ENCODE measurements at regions of chr12 and their contacts with region 1.

Region 1: DNA sequence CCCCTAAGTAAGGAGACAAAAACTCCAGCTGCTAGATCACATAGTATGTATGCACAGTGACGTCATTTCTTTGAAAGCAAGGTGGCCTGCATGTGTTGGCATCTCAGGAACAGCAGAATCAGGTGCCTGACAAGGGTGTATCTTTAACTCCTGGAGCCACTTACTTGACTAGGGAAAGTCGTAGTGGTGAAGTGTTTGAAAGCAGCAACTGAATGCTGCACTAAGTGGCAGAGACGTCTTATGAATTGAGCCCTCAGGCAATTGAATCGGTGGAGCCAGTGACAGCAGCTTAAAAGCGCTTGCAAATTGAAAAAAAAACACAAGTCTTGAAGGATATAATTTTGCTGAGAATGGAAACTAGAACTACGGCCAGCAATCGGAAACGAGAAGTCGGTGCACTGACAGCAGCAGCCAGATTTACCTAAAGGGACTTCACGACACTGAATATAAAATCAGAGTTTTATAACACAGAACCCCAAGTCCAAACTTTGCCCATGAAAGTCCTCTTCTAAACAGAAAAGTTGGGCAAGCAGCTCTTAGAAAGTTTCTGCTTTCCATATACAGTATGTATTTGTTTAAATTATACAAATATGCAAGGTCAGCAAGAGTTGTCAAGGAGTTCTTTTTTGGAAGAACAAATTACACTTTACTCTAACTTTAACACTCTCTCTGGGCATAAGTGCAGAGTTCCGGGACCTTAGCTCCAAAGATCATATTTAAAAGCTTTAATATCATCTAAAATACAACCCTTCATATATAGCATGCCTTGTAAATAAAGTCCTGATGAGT is 1.1 kb downstream of the IGF1 start:
- DNase-seq: peak; percentile 62
- ATAC-seq: peak; percentile 54
- H3K4me3 ChIP-seq: peak overlapping the region; percentile 59
- H3K27ac ChIP-seq: peak overlapping the region; percentile 78
- H3K4me1 ChIP-seq: peaks cover 53% of the 10 kb centered on the region
- H3K27me3 ChIP-seq: no peaks in the 10 kb centered on the region
- CTCF ChIP-seq: no peak
- EP300 ChIP-seq: no peak
- POLR2A ChIP-seq: no peak
- RAD21 ChIP-seq: no peak

Region 2: DNA sequence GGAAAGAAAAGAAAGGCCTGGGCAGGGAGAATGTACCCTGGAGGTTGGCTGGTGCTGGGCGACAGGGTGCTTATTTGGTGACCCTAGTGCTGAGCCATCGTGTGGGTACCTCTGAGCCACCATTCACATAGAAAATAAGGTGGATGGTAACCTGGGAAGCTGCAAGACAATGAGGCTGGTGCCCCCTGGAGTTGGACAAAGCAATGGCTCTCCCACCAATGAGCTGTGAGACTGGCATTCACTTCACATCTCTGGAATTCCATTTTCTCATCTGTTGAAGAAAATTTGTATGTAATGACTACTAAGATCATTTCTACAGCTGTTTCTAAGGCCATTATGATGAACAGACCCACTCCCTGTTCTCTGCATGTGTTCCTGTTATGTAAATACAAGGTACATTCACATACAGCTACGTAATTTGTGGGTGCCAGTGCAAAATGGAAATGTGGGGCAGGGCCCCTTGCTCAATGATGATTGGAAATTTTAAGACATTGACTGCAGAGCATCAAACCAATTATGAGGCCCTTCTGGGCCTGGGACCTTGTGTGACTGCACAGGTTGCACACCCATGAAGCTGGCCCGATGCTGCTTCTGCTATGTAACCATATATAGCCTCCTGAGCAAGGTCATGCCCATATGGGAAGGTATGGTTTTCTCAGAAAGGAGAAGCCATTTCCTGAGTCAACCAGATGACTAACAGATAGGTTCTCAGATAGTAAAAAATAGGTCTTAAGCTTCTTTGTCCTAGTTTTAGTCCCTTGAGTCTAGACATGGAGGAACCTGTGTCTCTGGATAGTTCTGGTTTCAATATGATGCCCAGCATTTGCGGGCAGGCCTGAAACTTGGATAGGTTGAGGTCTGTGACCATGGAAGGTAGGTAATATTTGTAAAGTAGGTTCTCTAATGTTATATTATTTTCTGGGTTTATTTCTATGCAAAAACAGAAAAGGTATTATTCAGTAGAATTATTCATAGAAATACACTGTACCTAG is 64.5 kb after region 1 on chr12:
- CTCF ChIA-PET with region 1: interaction called, 28 read pairs
- POLR2A ChIA-PET with region 1: no interaction called
- RAD21 ChIA-PET with region 1: interaction called, 10 read pairs
- SMC1A ChIA-PET with region 1: interaction called, 6 read pairs
- in situ Hi-C with region 1: no loop called
- intact Hi-C with region 1: no loop called
- DNase-seq: no peak
- ATAC-seq: peak; percentile 80
- H3K4me3 ChIP-seq: no peak overlapping the region
- H3K27ac ChIP-seq: no peak overlapping the region
- H3K4me1 ChIP-seq: peaks cover 6% of the 10 kb centered on the region
- H3K27me3 ChIP-seq: no peaks in the 10 kb centered on the region
- CTCF ChIP-seq: peak; percentile 42 to 46 (median 45); a peak in 5 of 6 replicates
- EP300 ChIP-seq: no peak
- POLR2A ChIP-seq: no peak
- RAD21 ChIP-seq: peak; percentile 62

Measured in GM12878 (cell line).